ENCODE measurements at regions of chrX and their contacts with region 1.

Region 1: DNA sequence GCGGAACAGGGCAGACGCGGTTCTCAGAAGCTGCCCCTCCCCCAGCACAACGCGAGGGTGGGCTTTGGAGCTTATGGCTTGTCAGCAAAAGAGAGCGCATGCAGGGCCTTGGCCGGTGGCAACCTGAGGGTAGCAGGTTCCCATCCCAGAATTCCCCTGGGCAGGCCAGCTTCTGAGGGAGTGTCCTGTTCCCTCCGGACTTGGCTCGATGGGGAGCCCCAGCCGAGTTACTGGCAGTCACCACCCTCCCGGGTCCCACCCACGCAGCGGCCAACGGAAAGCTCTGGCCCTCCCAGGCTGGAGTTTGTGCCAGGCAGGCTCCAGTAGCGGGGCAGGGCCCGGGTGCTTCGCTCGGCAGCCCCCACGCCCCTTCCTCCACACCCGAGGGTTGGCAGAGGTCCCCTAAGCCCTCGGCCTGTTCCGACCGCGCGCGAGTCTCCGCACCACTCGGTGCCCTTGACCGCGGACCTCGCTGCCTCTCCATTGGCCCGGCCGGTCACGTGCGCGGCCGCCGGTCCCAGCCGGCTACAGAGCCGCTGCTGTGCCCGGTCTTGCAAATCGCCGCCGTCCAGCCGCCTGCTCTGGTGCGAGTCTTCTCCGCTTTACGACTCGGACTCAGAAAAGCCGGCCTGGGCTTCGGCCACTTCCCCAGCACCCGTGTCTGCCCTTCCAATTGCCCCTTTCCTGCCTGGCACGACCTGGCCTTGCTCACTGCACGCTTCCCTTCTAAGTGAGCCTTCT is 20.9 kb upstream of the MTM1 start:
- DNase-seq: peak in 1 of 9 donors; percentile 25
- ATAC-seq: peak; percentile 53
- H3K4me3 ChIP-seq: peak overlapping the region; percentile 43
- H3K4me3 Mint-ChIP-seq: peak overlapping the region; percentile 74 to 91 (median 82)
- H3K27ac ChIP-seq: peak overlapping the region; percentile 14
- H3K27ac Mint-ChIP-seq: peak overlapping the region in 7 of 9 donors; percentile 52 to 96 (median 82)
- H3K4me1 ChIP-seq: peaks cover 11 to 13% of the 10 kb centered on the region in 2 donors
- H3K4me1 Mint-ChIP-seq: peaks cover 10 to 35% (median 24%) of the 10 kb centered on the region in 7 donors
- H3K27me3 ChIP-seq: no peaks in the 10 kb centered on the region
- H3K27me3 Mint-ChIP-seq: no peaks in the 10 kb centered on the region

Region 2: GRCh38 chrX:150478496-150479492 is 68.8 kb before region 1 on chrX:
- CTCF ChIA-PET with region 1: no interaction called
- POLR2A ChIA-PET with region 1: no interaction called
- intact Hi-C with region 1: loop called in 1 of 2 experiments (anchors 5 kb)
- DNase-seq: peak in 4 of 9 donors; percentile 4 to 31 (median 24)
- ATAC-seq: peak; percentile 46
- H3K4me3 ChIP-seq: peak overlapping the region; percentile 46
- H3K4me3 Mint-ChIP-seq: peak overlapping the region; percentile 51 to 81 (median 76)
- H3K27ac ChIP-seq: peak overlapping the region; percentile 41
- H3K27ac Mint-ChIP-seq: peak overlapping the region in 8 of 9 donors; percentile 84 to 97 (median 85)
- H3K4me1 ChIP-seq: peaks cover 3 to 14% of the 10 kb centered on the region in 2 donors
- H3K4me1 Mint-ChIP-seq: peaks cover 6 to 67% (median 34%) of the 10 kb centered on the region in 7 donors
- H3K27me3 ChIP-seq: no peaks in the 10 kb centered on the region
- H3K27me3 Mint-ChIP-seq: no peaks in the 10 kb centered on the region

Region 3: DNA sequence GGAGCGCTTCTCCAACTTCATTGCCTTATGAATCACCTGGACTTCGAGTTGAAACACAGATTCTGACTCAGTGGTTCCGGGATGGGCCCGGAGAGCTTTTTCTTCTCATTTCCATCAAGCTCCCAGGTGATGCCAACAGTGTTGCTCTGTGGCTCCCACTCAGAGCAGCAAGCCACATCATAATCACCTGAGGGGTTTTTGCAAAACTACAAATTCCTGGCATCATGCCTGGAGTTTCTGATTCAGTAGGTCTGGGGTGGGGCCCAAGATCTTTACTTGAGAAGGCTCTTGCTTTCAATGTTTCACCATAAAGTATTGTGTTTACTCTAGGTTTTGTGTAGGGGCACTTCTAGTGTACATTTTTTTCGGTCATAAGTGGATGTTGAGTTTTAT is 27.9 kb after region 1 on chrX:
- CTCF ChIA-PET with region 1: interaction called, 5 read pairs
- POLR2A ChIA-PET with region 1: interaction called, 52 read pairs
- intact Hi-C with region 1: loop called in 1 of 2 experiments (anchors 1 kb)
- DNase-seq: peak in 4 of 9 donors; percentile 15 to 75 (median 36)
- ATAC-seq: peak; percentile 78
- H3K4me3 ChIP-seq: peak overlapping the region; percentile 42
- H3K4me3 Mint-ChIP-seq: peak overlapping the region; percentile 64 to 86 (median 78)
- H3K27ac ChIP-seq: peak overlapping the region; percentile 59
- H3K27ac Mint-ChIP-seq: peak overlapping the region; percentile 45 to 94 (median 83)
- H3K4me1 ChIP-seq: peaks cover 62 to 68% of the 10 kb centered on the region in 2 donors
- H3K4me1 Mint-ChIP-seq: peaks cover 23 to 88% (median 79%) of the 10 kb centered on the region in 7 donors
- H3K27me3 ChIP-seq: no peaks in the 10 kb centered on the region
- H3K27me3 Mint-ChIP-seq: no peaks in the 10 kb centered on the region

Region 4: GRCh38 chrX:150587585-150588503 is 40.3 kb after region 1 on chrX:
- CTCF ChIA-PET with region 1: interaction called, 6 read pairs
- POLR2A ChIA-PET with region 1: interaction called, 3 read pairs
- intact Hi-C with region 1: loop called (anchors 1 to 5 kb)
- DNase-seq: peak in 6 of 9 donors; percentile 16 to 53 (median 38)
- ATAC-seq: peak; percentile 55
- H3K4me3 ChIP-seq: no peak overlapping the region
- H3K4me3 Mint-ChIP-seq: no peak overlapping the region
- H3K27ac ChIP-seq: no peak overlapping the region
- H3K27ac Mint-ChIP-seq: no peak overlapping the region
- H3K4me1 ChIP-seq: no peaks in the 10 kb centered on the region
- H3K4me1 Mint-ChIP-seq: peaks cover 0 to 33% (median 25%) of the 10 kb centered on the region in 7 donors
- H3K27me3 ChIP-seq: no peaks in the 10 kb centered on the region
- H3K27me3 Mint-ChIP-seq: no peaks in the 10 kb centered on the region

Region 5: GRCh38 chrX:150643271-150643670 is 95.7 kb after region 1 on chrX:
- CTCF ChIA-PET with region 1: no interaction called
- POLR2A ChIA-PET with region 1: no interaction called
- intact Hi-C with region 1: loop called in 1 of 2 experiments (anchors 5 kb)
- DNase-seq: no peak
- ATAC-seq: no peak
- H3K4me3 ChIP-seq: no peak overlapping the region
- H3K4me3 Mint-ChIP-seq: no peak overlapping the region
- H3K27ac ChIP-seq: no peak overlapping the region
- H3K27ac Mint-ChIP-seq: no peak overlapping the region
- H3K4me1 ChIP-seq: no peaks in the 10 kb centered on the region
- H3K4me1 Mint-ChIP-seq: no peaks in the 10 kb centered on the region
- H3K27me3 ChIP-seq: no peaks in the 10 kb centered on the region
- H3K27me3 Mint-ChIP-seq: no peaks in the 10 kb centered on the region

Measured in naive thymus-derived CD4-positive, alpha-beta T cell (primary cell).